ENCODE measurements at regions of chr11 and their contacts with region 1.

Region 1: GRCh38 chr11:75667831-75668450 is 897 bp downstream of the MAP6 start:
- DNase-seq: peak; percentile 34
- H3K4me3 Mint-ChIP-seq: peak overlapping the region; percentile 94
- H3K27ac Mint-ChIP-seq: peak overlapping the region; percentile 82
- H3K4me1 Mint-ChIP-seq: peaks cover 52% of the 10 kb centered on the region
- H3K27me3 Mint-ChIP-seq: peaks cover 63% of the 10 kb centered on the region

Region 2: DNA sequence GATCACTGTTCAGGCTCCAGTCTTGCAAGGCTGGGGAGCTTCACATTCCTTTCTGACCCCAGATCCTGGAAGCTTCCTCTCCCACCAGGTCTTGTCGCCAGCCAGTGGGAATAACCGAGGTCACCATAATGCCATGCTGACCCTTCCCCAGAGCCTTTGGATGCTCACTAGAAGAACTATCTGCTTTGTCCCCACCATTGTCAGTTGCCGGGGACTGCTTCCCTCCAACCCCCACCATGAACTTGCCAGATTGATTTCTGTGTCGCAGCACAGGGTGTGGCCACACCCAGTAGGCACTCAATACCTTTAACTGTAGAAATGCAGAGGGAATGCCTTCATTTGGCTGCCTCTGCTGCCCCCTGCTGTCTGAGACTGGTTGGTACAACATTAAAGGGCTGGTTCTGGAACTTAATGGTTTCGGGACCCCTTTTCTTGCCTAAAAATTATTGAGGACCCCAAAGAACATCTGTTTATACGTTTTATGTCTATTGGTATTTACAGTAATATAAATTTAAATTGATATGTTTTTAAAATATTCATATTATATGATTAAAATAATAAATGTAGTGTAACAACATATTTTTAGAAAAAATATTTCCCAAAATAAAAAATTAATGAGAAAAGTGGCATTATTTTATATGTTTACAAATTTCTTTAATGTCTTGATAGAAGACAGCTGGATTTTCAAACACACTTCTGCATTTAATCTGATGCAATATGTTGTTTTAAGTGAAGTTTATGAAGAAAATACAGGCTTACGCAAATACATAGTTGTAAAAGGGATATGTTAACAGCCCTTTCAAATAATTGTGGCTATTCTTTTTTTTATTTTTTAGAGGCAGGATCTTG is 135.5 kb before region 1 on chr11:
- intact Hi-C with region 1: loop called (anchors 5 kb)
- DNase-seq: peak; percentile 74
- H3K4me3 Mint-ChIP-seq: peak overlapping the region; percentile 1
- H3K27ac Mint-ChIP-seq: no peak overlapping the region
- H3K4me1 Mint-ChIP-seq: peaks cover 35% of the 10 kb centered on the region
- H3K27me3 Mint-ChIP-seq: peaks cover 12% of the 10 kb centered on the region

Region 3: DNA sequence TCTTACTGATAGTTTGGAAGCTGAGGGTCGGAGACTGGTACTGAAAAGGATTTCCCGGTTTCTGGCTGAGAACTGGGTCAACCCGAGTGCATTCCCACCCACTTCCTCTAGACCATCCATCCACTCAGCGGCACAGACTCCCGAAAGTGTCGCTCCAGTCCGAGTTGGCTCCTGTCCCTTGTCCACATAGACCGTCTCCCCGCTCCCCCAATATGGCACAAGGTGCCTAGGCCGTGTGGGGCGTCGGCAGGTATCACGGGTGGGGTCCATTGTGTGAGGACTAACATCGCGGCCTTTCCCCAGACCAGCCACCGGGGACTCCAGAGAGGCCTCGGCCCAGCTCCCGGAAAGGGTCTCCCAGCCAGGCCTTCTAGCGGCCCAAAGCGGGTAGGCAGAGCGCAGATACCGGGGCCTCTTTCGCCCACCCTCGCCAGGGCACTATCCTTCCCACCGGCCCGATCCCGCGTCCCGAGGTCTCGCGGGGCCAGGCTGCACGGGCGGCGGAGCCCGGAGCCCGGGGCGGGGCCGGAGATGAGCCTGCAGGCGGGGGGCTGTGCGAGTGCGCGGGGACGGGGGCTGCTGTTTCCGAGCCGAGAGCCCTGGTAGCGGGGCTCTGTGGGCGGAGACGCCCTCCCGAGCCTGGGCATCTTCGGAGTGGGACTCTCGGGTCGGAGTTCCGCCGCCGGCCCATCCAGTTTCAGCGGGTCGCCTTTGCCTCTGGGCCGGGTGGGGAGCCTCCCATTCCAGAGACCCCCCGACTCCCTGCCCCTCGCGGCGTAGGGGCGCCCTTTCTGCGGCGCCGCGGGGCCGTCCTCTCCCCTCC is 84.8 kb before region 1 on chr11:
- intact Hi-C with region 1: loop called (anchors 5 kb)
- DNase-seq: no peak
- H3K4me3 Mint-ChIP-seq: peak overlapping the region; percentile 39
- H3K27ac Mint-ChIP-seq: peak overlapping the region; percentile 19
- H3K4me1 Mint-ChIP-seq: peaks cover 10% of the 10 kb centered on the region
- H3K27me3 Mint-ChIP-seq: peaks cover 39% of the 10 kb centered on the region

Region 4: GRCh38 chr11:75689863-75690609 is 22.1 kb after region 1 on chr11:
- intact Hi-C with region 1: loop called (anchors 2 kb)
- DNase-seq: no peak
- H3K4me3 Mint-ChIP-seq: no peak overlapping the region
- H3K27ac Mint-ChIP-seq: peak overlapping the region; percentile 9
- H3K4me1 Mint-ChIP-seq: peaks cover 16% of the 10 kb centered on the region
- H3K27me3 Mint-ChIP-seq: peaks cover 29% of the 10 kb centered on the region

Measured in activated T-helper 1 cell treated with anti-CD3 and anti-CD28 coated beads, Interleukin-12 subunit alpha, Interleukin-12 subunit beta, Interleukin-2, Interleukin-4 antibody, amounts not matched to agents 30 ng/mL and 10 ng/mL and 1 ng/mL, durations not matched to agents 14 hours and 24 hours and 36 hours (primary cell).